ENCODE measurements at regions of chr1 and their contacts with region 1.

Region 1: DNA sequence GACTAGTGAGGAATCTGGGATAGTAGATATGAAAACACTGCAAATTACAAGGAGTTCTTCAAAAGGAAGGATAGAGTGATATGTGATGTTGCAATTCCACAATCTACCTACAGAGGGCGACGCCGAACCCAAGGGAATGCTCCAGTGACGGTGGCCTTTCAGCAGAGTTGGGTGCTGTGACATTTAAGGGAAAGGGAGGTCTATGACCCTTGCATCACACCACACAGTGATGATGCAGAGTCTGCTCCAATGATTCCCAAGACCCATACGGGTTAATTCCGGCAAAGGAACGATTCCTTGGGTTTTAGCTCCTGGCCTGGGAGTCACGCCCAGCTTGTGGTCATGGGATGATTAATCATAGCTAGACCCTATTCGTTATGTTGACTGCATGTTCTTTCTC is 123.0 kb upstream of the IGSF21 start:
- DNase-seq: peak in 1 of 10 donors; percentile 34
- H3K4me3 ChIP-seq: no peak overlapping the region
- H3K27ac ChIP-seq: no peak overlapping the region
- H3K27me3 ChIP-seq: no peaks in the 10 kb centered on the region
- CTCF ChIP-seq: peak; percentile 18 to 71 (median 60)

Region 2: GRCh38 chr1:18062180-18062579 is 77.6 kb after region 1 on chr1:
- intact Hi-C with region 1: no loop called
- DNase-seq: no peak
- H3K4me3 ChIP-seq: no peak overlapping the region
- H3K27ac ChIP-seq: no peak overlapping the region
- H3K27me3 ChIP-seq: peaks cover 0 to 16% (median 0%) of the 10 kb centered on the region in 45 donors
- CTCF ChIP-seq: no peak

Region 3: DNA sequence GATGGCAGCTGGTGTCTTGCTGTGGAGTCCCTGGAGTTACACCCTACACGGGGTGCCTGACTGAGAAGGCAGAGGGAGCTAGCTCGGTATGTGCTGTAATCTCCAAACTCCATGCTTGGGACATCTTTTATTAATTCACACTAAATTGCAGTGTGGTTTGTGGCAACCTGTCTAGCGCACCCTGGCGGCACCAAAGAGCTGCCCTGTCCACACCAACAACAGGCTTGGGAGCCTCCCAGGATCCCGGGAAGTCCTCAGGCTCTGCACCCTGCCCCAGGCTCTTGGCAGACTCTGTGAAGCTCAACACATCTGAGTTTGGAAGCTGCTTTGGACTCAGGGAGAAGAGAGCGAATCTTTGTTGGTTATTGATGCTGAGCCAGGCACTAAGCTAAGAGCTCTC is 262.0 kb after region 1 on chr1:
- intact Hi-C with region 1: loop called in 1 of 2 experiments (anchors 10 kb)
- DNase-seq: no peak
- H3K4me3 ChIP-seq: no peak overlapping the region
- H3K27ac ChIP-seq: no peak overlapping the region
- H3K27me3 ChIP-seq: peaks cover 0 to 5% (median 0%) of the 10 kb centered on the region in 45 donors
- CTCF ChIP-seq: no peak